Motor neuron (in vitro differentiated cells): ENCODE measurements at regions of chrX and their contacts with region 1.

Region 1: DNA sequence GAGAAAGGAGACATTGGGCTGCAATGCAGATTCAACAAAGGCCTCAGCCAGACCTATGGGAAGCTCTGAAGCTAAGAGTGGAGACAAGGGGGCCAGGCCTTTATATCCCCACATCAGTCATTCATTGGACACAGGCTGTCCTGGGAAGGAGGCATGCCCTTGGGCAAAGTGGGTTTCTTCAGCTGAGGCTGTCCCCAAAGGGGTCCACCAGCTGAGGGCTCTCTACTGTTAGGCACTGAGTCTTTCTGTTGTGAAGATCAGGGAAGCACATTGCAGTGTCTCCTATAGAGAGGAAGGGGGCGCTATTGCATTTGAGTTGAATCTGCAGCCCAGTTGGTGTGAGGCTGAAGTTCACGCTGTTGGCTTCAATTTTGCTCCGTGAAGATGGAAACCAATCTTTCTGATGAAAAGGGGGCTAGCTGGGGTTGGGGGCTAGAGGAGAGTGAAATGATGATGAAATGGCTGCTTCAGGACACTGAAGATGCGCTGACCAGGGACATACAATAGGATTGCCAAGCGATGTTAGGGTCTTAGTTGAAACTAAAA is 48.0 kb downstream of the SLC25A5 start:
- ATAC-seq: peak; percentile 71 to 86 (median 80)
- H3K4me3 ChIP-seq: no peak overlapping the region
- H3K27ac ChIP-seq: no peak overlapping the region
- H3K4me1 ChIP-seq: peaks cover 0 to 2% of the 10 kb centered on the region in 2 donors

Region 2: GRCh38 chrX:119729408-119730201 is 213.4 kb after region 1 on chrX:
- in situ Hi-C with region 1: loop called in 1 of 9 experiments (anchors 25 kb)
- ATAC-seq: peak in 3 of 8 experiments; percentile 54 to 70 (median 55)
- H3K4me3 ChIP-seq: no peak overlapping the region
- H3K27ac ChIP-seq: no peak overlapping the region
- H3K4me1 ChIP-seq: no peaks in the 10 kb centered on the region